Aorta (tissue), 5 donors: ENCODE measurements at regions of chr10 and their contacts with region 1.

Region 1: GRCh38 chr10:74021248-74022055 is 23.5 kb downstream of the VCL start:
- DNase-seq: no peak
- ATAC-seq: no peak
- H3K4me3 ChIP-seq: no peak overlapping the region
- H3K27ac ChIP-seq: no peak overlapping the region
- H3K4me1 ChIP-seq: peaks cover 9 to 19% of the 10 kb centered on the region in 2 donors
- H3K27me3 ChIP-seq: no peaks in the 10 kb centered on the region

Region 2: GRCh38 chr10:73586583-73586984 is 434.9 kb before region 1 on chr10:
- intact Hi-C with region 1: no loop called
- DNase-seq: no peak
- ATAC-seq: peak; percentile 86
- H3K4me3 ChIP-seq: no peak overlapping the region
- H3K27ac ChIP-seq: peak overlapping the region in 1 of 2 donors; percentile 82
- H3K4me1 ChIP-seq: peaks cover 0 to 2% of the 10 kb centered on the region in 2 donors
- H3K27me3 ChIP-seq: no peaks in the 10 kb centered on the region

Region 3: GRCh38 chr10:73899423-73899822 is 122.0 kb before region 1 on chr10:
- intact Hi-C with region 1: no loop called
- DNase-seq: no peak
- ATAC-seq: no peak
- H3K4me3 ChIP-seq: no peak overlapping the region
- H3K27ac ChIP-seq: peak overlapping the region in 1 of 2 donors; percentile 0
- H3K4me1 ChIP-seq: no peaks in the 10 kb centered on the region
- H3K27me3 ChIP-seq: no peaks in the 10 kb centered on the region

Region 4: GRCh38 chr10:74067373-74068352 is 46.2 kb after region 1 on chr10:
- intact Hi-C with region 1: loop called in 1 of 2 experiments (anchors 5 kb)
- DNase-seq: no peak
- ATAC-seq: no peak
- H3K4me3 ChIP-seq: no peak overlapping the region
- H3K27ac ChIP-seq: no peak overlapping the region
- H3K4me1 ChIP-seq: peaks cover 4 to 6% of the 10 kb centered on the region in 2 donors
- H3K27me3 ChIP-seq: no peaks in the 10 kb centered on the region